AG04449 (cell line): ENCODE measurements at regions of chr6 and their contacts with region 1.

Region 1: DNA sequence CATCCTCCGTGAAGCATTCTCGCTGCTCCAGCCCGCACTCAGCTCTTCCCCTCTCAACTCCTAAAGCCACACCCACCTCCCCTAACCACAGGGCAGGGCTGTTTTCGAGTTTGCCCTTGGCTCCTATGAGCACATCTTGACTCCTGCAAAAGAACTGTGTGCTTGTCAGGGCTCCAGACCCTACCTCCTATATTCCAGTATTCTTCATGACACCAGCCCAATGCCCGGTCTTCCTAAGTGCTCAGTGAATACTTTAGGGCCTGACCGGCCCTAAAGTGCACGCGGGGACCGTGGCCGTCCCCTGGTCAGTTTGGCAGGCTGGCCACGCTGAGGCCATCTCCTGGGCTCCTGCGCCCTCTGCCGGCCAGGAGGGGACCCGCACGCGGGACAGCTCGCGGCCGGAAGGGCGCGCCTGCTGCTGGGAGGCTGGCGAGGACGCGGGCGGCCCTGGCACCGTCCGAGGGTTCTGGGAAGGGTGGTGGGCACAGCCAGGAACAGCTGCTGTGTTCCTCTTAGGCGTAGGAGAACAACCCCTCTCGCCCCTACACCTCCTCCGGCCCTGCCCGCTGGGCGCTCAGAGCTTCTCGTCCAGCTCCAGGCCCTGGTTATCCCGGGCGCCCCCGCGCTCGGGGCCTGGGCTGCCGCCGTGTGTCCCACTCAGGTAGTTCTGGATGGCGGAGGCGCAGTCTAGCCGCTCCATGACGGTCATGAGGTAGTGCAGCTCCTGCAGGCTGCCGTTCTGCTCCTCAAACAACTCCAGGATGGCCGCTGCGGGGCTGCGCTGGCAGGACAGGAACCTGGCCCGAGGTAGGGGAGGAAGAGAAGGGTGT is 11.0 kb downstream of the UNC5CL start:
- DNase-seq: no peak
- H3K4me3 ChIP-seq: peak overlapping the region; percentile 57
- CTCF ChIP-seq: peak; percentile 98

Region 2: DNA sequence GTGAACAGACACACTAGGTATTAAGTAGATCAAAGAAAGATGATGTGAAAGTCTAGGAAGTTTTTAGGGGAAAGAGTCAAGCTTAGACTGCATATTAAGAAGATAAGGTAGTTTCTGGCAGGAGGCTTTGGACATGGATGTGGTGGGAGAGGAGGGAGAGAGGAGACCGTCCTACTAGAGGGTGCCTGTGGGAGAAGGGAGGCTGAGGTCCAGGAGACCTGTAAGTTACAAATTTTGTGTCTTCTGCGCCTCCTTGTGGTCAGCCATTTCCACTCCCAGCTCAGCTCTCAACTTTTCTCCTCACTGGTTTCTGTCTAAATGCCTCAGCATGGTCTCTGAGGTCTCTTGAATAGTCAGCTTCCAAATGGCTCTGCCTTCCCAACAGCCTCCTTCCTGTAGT is 182.5 kb before region 1 on chr6:
- CTCF ChIA-PET with region 1: interaction called, 14 read pairs
- POLR2A ChIA-PET with region 1: no interaction called
- DNase-seq: no peak
- H3K4me3 ChIP-seq: no peak overlapping the region
- CTCF ChIP-seq: peak; percentile 69

Region 3: DNA sequence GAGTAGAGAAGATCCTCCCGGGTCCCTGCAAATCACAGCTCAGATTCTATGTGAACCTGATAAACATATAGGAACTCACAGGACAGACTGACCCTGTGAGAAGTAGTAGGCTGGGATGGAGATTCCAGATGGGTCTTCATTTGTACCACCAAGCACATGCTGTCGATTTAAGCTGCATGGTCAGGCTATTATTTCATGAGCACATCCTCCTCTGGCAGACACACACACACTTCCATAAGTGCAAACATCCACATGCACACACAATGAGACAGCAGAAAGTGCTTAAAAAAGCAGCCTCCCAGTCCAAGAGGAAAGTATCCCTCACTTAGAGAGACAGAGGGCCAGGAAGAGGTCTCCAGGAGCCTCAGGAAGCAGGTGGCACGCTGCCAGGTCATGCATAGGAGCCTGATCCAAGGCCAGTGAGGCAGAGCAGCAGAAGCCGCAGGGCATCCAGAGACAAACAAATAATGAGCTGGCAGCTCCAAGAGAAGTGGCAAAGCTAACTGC is 120.8 kb before region 1 on chr6:
- CTCF ChIA-PET with region 1: interaction called, 16 read pairs
- POLR2A ChIA-PET with region 1: no interaction called
- DNase-seq: no peak
- H3K4me3 ChIP-seq: no peak overlapping the region
- CTCF ChIP-seq: no peak

Region 4: DNA sequence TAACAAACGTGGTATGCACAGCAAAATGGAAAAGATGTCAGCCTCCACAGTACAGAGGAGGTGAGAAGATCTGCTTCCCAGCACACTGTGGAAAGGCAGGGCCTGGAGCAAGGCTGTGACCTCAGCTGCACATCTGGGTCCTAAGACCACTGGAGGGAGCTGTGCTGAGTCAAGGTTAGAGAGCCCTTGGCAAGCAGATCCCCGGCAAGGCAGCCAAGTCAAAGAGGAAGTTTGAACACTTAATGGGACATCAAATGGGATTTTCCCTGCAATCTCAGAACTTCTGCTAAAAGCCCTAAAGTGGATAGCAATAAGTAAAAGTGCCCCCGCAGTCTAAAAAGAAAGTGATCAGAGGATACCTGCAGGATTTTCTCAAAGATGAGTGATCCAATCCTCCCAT is 28.4 kb before region 1 on chr6:
- CTCF ChIA-PET with region 1: interaction called, 19 read pairs
- POLR2A ChIA-PET with region 1: no interaction called
- DNase-seq: no peak
- H3K4me3 ChIP-seq: no peak overlapping the region
- CTCF ChIP-seq: peak; percentile 19

Region 5: GRCh38 chr6:41017663-41018062 is 10.4 kb before region 1 on chr6:
- CTCF ChIA-PET with region 1: interaction called, 39 read pairs
- POLR2A ChIA-PET with region 1: no interaction called
- DNase-seq: no peak
- H3K4me3 ChIP-seq: no peak overlapping the region
- CTCF ChIP-seq: no peak

Region 6: GRCh38 chr6:41051873-41052272 is 23.9 kb after region 1 on chr6:
- CTCF ChIA-PET with region 1: interaction called, 99 read pairs
- POLR2A ChIA-PET with region 1: no interaction called
- DNase-seq: no peak
- H3K4me3 ChIP-seq: no peak overlapping the region
- CTCF ChIP-seq: no peak

Region 7: DNA sequence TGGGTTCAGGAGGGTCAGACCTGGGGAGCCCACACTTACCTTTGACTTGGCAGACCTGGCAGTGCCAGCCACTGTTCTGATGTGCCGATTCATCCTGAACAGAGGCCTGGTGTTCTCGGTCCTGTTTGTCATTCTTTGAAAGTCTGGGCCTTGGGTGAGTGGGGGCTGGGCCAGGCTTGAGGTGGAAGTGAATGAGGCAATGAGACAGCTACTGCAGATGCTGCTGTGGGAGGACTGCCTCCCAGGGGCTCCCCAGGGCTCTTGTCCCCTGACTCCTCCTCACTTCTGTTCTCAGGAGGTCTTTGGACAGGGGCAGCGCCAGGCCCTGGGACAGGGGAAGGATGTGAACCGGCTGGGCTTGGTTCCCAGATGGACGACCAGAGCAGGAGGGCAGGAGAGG is 194.5 kb after region 1 on chr6:
- CTCF ChIA-PET with region 1: no interaction called
- POLR2A ChIA-PET with region 1: no interaction called
- DNase-seq: no peak
- H3K4me3 ChIP-seq: no peak overlapping the region
- CTCF ChIP-seq: no peak

Region 8: GRCh38 chr6:41318654-41319565 is 290.9 kb after region 1 on chr6:
- CTCF ChIA-PET with region 1: interaction called, 13 read pairs
- POLR2A ChIA-PET with region 1: no interaction called
- DNase-seq: peak; percentile 17
- H3K4me3 ChIP-seq: peak overlapping the region; percentile 51
- CTCF ChIP-seq: peak; percentile 99